ENCODE measurements at regions of chr20 and their contacts with region 1.

Region 1: GRCh38 chr20:60057123-60057801 is 99.0 kb downstream of the CDH26 start:
- DNase-seq: no peak
- H3K4me3 ChIP-seq: no peak overlapping the region
- CTCF ChIP-seq: peak; percentile 75

Region 2: GRCh38 chr20:60037120-60037499 is 20.2 kb before region 1 on chr20:
- CTCF ChIA-PET with region 1: interaction called, 13 read pairs
- POLR2A ChIA-PET with region 1: no interaction called
- DNase-seq: no peak
- H3K4me3 ChIP-seq: no peak overlapping the region
- CTCF ChIP-seq: peak; percentile 66

Region 3: DNA sequence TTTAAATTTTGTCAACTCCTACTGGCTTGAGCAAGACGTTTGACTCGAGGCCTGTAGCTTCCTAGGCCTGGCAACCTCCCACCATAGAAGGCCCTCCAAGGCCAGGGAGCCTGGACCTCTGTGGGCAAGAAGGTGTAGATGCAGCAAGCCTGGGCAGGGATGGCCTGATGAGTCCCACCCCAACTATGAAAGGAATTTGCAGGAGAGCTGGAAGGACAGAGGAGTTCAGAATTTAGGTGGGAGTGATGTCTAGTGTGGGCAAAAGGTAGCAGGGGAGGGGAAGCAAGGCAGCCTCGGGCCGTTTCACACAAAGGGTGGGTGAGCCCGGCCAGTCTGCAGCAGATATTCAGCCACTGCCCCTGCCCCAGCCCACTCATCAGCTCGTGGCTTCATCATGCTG is 146.2 kb after region 1 on chr20:
- CTCF ChIA-PET with region 1: interaction called, 94 read pairs
- POLR2A ChIA-PET with region 1: no interaction called
- DNase-seq: no peak
- H3K4me3 ChIP-seq: no peak overlapping the region
- CTCF ChIP-seq: no peak

Region 4: DNA sequence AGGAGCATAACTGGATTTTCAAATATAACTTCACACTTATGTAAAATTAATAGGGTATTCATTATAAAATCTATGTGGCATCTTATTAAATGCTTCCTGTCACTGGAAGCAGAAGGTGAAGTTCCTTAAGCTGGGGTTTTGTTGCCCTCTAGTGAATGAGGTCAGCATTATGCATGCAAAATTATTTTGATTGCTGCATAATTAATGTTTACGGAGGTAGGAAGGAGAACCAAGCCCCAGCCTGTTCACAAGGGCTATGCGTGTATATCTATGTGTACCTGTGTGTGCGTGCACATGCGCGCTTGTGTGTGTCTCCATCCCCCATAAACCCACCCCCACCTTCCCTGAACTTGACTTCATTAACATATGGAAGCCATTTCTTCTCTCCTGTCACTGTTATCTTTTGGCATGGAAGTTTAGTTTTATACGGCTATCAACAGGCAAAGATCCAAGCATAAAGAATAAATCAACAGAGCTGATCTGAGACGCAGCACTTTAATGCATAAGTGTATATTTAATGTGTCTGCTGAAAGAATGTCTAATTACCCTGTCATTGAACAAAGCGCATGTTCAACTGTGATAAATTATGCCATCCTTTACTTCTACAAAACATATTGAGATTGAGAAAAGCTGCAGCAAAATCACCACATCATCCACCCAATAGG is 1104.6 kb after region 1 on chr20:
- CTCF ChIA-PET with region 1: interaction called, 11 read pairs
- POLR2A ChIA-PET with region 1: no interaction called
- DNase-seq: no peak
- H3K4me3 ChIP-seq: no peak overlapping the region
- CTCF ChIP-seq: no peak

Measured in AG04449 (cell line).